Naive thymus-derived CD4-positive, alpha-beta T cell (primary cell): ENCODE measurements at regions of chr5 and their contacts with region 1.

Region 1: GRCh38 chr5:151063142-151063949 is 17.5 kb downstream of the TNIP1 start:
- DNase-seq: no peak
- ATAC-seq: no peak
- H3K4me3 ChIP-seq: no peak overlapping the region
- H3K4me3 Mint-ChIP-seq: no peak overlapping the region
- H3K27ac ChIP-seq: no peak overlapping the region
- H3K27ac Mint-ChIP-seq: peak overlapping the region in 3 of 9 donors; percentile 0 to 37 (median 8)
- H3K4me1 ChIP-seq: peaks cover 13 to 28% of the 10 kb centered on the region in 2 donors
- H3K4me1 Mint-ChIP-seq: peaks cover 33 to 67% (median 60%) of the 10 kb centered on the region in 7 donors
- H3K27me3 ChIP-seq: no peaks in the 10 kb centered on the region
- H3K27me3 Mint-ChIP-seq: no peaks in the 10 kb centered on the region

Region 2: GRCh38 chr5:150978590-150978989 is 84.8 kb before region 1 on chr5:
- CTCF ChIA-PET with region 1: no interaction called
- POLR2A ChIA-PET with region 1: no interaction called
- intact Hi-C with region 1: no loop called
- DNase-seq: no peak
- ATAC-seq: no peak
- H3K4me3 ChIP-seq: no peak overlapping the region
- H3K4me3 Mint-ChIP-seq: no peak overlapping the region
- H3K27ac ChIP-seq: no peak overlapping the region
- H3K27ac Mint-ChIP-seq: no peak overlapping the region
- H3K4me1 ChIP-seq: no peaks in the 10 kb centered on the region
- H3K4me1 Mint-ChIP-seq: no peaks in the 10 kb centered on the region
- H3K27me3 ChIP-seq: no peaks in the 10 kb centered on the region
- H3K27me3 Mint-ChIP-seq: peaks cover 0 to 24% (median 15%) of the 10 kb centered on the region in 5 donors

Region 3: GRCh38 chr5:151080623-151081430 is 17.5 kb after region 1 on chr5 and contains the start of gene TNIP1:
- CTCF ChIA-PET with region 1: no interaction called
- POLR2A ChIA-PET with region 1: interaction called, 7 read pairs
- intact Hi-C with region 1: loop called in 1 of 2 experiments (anchors 2 kb)
- DNase-seq: peak; percentile 86 to 99 (median 90)
- ATAC-seq: peak; percentile 94
- H3K4me3 ChIP-seq: peak within 1 kb of the TSS; percentile 86
- H3K4me3 Mint-ChIP-seq: peak within 1 kb of the TSS; percentile 85 to 95 (median 90)
- H3K27ac ChIP-seq: peak within 1 kb of the TSS; percentile 96
- H3K27ac Mint-ChIP-seq: peak within 1 kb of the TSS; percentile 86 to 95 (median 91)
- H3K4me1 ChIP-seq: peaks cover 37 to 69% of the 10 kb centered on the region in 2 donors
- H3K4me1 Mint-ChIP-seq: peaks cover 53 to 84% (median 73%) of the 10 kb centered on the region in 7 donors
- H3K27me3 ChIP-seq: no peaks in the 10 kb centered on the region
- H3K27me3 Mint-ChIP-seq: no peaks in the 10 kb centered on the region
- total RNA-seq, gene TNIP1: 124 to 234 (median 131) TPM

Region 4: GRCh38 chr5:151094054-151094851 is 30.9 kb after region 1 on chr5:
- CTCF ChIA-PET with region 1: no interaction called
- POLR2A ChIA-PET with region 1: interaction called, 5 read pairs
- intact Hi-C with region 1: loop called in 1 of 2 experiments (anchors 5 kb)
- DNase-seq: peak in 2 of 9 donors; percentile 31 to 73
- ATAC-seq: peak; percentile 74
- H3K4me3 ChIP-seq: no peak overlapping the region
- H3K4me3 Mint-ChIP-seq: peak overlapping the region; percentile 7 to 73 (median 47)
- H3K27ac ChIP-seq: peak overlapping the region; percentile 26
- H3K27ac Mint-ChIP-seq: peak overlapping the region; percentile 38 to 90 (median 84)
- H3K4me1 ChIP-seq: peaks cover 31 to 53% of the 10 kb centered on the region in 2 donors
- H3K4me1 Mint-ChIP-seq: peaks cover 51 to 86% (median 69%) of the 10 kb centered on the region in 7 donors
- H3K27me3 ChIP-seq: no peaks in the 10 kb centered on the region
- H3K27me3 Mint-ChIP-seq: no peaks in the 10 kb centered on the region

Region 5: DNA sequence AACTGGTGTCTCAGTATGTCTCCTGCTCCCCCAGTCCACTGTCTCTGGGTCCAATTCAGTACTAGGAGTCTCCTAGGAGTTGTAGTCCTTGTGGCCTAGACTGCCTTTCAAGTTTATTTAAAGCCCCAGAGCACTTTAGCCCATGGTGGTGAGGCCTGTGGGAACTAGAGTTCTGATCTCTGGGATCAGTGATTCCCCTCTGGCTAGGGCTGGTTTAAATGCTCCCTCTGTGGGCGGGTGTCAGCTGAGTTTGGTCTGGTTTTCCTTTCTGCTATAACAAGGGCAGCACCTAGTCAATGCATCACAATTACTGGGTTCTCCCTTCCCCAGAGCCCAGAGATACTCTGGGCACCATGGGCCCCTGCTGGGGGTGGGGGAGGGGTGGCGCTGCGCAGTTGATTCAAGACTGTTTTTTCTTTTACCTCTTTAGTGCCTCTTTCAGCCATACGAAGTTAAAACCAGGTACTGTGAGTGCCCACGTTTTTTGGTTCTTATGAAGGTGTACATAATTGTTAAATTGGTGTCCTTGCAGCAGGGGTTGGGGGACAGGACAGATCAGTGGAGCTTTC is 249.5 kb after region 1 on chr5:
- CTCF ChIA-PET with region 1: no interaction called
- POLR2A ChIA-PET with region 1: no interaction called
- intact Hi-C with region 1: no loop called
- DNase-seq: no peak
- ATAC-seq: no peak
- H3K4me3 ChIP-seq: no peak overlapping the region
- H3K4me3 Mint-ChIP-seq: no peak overlapping the region
- H3K27ac ChIP-seq: no peak overlapping the region
- H3K27ac Mint-ChIP-seq: no peak overlapping the region
- H3K4me1 ChIP-seq: no peaks in the 10 kb centered on the region
- H3K4me1 Mint-ChIP-seq: peaks cover 0 to 4% (median 0%) of the 10 kb centered on the region in 7 donors
- H3K27me3 ChIP-seq: no peaks in the 10 kb centered on the region
- H3K27me3 Mint-ChIP-seq: peaks cover 0 to 24% (median 21%) of the 10 kb centered on the region in 5 donors